CD4-positive, alpha-beta T cell (primary cell): ENCODE measurements at regions of chr9 and their contacts with region 1.

Region 1: GRCh38 chr9:94783102-94783664 is 56.7 kb downstream of the AOPEP start:
- DNase-seq: peak in 13 of 14 experiments; percentile 3 to 66 (median 25)
- ATAC-seq: no peak
- H3K4me3 ChIP-seq: no peak overlapping the region
- H3K4me3 Mint-ChIP-seq: no peak overlapping the region
- H3K27ac ChIP-seq: no peak overlapping the region
- H3K27ac Mint-ChIP-seq: no peak overlapping the region
- H3K4me1 ChIP-seq: peaks cover 3% of the 10 kb centered on the region
- H3K4me1 Mint-ChIP-seq: peaks cover 13% of the 10 kb centered on the region
- H3K27me3 ChIP-seq: no peaks in the 10 kb centered on the region
- H3K27me3 Mint-ChIP-seq: no peaks in the 10 kb centered on the region
- CTCF ChIP-seq: peak; percentile 72

Region 2: GRCh38 chr9:95127249-95128176 is 344.3 kb after region 1 on chr9:
- CTCF ChIA-PET with region 1: interaction called, 5 read pairs
- POLR2A ChIA-PET with region 1: no interaction called
- intact Hi-C with region 1: loop called (anchors 1 kb)
- DNase-seq: peak; percentile 41 to 79 (median 64)
- ATAC-seq: peak; percentile 91
- H3K4me3 ChIP-seq: no peak overlapping the region
- H3K4me3 Mint-ChIP-seq: no peak overlapping the region
- H3K27ac ChIP-seq: no peak overlapping the region
- H3K27ac Mint-ChIP-seq: no peak overlapping the region
- H3K4me1 ChIP-seq: peaks cover 8% of the 10 kb centered on the region
- H3K4me1 Mint-ChIP-seq: peaks cover 5% of the 10 kb centered on the region
- H3K27me3 ChIP-seq: no peaks in the 10 kb centered on the region
- H3K27me3 Mint-ChIP-seq: no peaks in the 10 kb centered on the region
- CTCF ChIP-seq: peak; percentile 93